ENCODE measurements at regions of chr6 and their contacts with region 1.

Region 1: DNA sequence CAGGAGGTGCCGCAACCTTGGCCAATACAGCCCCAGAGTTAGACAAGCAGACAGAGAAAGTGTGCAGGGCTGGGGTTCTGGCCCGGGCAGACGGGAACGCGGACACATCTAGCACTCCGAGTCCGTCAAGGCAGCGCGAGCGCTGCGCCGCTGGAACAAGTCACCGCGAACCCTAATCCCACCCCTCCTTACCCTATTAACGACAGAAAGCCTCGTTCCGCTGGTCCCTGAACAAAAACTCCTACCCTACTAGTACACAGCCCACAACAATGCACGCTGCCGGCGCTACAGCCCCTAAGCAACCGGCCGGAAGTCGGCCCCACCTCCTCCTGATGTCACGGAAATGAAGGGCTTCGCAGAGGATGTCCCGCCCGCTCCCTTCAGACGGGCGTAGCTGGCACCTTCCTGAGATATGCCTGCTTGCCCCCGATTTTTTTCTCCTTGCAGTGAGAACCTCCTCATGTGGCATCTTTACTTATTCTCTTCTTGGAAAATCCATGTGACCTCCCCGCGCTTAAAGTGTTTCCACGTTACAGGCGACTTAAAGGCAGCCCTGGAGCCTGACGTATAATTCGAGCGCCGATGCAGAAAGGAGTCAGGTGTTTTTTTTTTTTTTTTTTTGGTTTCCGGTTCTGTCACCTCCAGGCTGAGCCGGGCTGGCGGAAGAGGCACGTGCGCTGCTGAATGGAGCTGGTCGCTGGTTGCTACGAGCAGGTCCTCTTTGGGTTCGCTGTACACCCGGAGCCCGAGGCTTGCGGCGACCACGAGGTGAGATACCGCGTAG is at the starts of genes C6orf52 and PAK1IP1:
- DNase-seq: peak; percentile 97
- ATAC-seq: peak; percentile 99
- H3K4me3 ChIP-seq: peak within 1 kb of the TSS; percentile 95 to 98
- H3K27ac ChIP-seq: peak within 1 kb of the TSS; percentile 98
- H3K4me1 ChIP-seq: peaks cover 27% of the 10 kb centered on the region
- H3K27me3 ChIP-seq: no peaks in the 10 kb centered on the region
- CTCF ChIP-seq: no peak
- total RNA-seq, gene C6orf52: 6.5 TPM
- total RNA-seq, gene PAK1IP1: 27.3 TPM

Region 2: GRCh38 chr6:10528170-10528981 is 166.1 kb before region 1 on chr6:
- CTCF ChIA-PET with region 1: no interaction called
- POLR2A ChIA-PET with region 1: interaction called, 15 read pairs
- in situ Hi-C with region 1: no loop called
- intact Hi-C with region 1: loop called (anchors 10 kb)
- DNase-seq: peak; percentile 86
- ATAC-seq: peak; percentile 73
- H3K4me3 ChIP-seq: peak overlapping the region; percentile 64 to 93
- H3K27ac ChIP-seq: peak overlapping the region; percentile 98
- H3K4me1 ChIP-seq: peaks cover 22% of the 10 kb centered on the region
- H3K27me3 ChIP-seq: no peaks in the 10 kb centered on the region
- CTCF ChIP-seq: no peak

Region 3: GRCh38 chr6:10567256-10568026 is 127.1 kb before region 1 on chr6:
- CTCF ChIA-PET with region 1: no interaction called
- POLR2A ChIA-PET with region 1: interaction called, 11 read pairs
- in situ Hi-C with region 1: no loop called
- intact Hi-C with region 1: no loop called
- DNase-seq: no peak
- ATAC-seq: no peak
- H3K4me3 ChIP-seq: no peak overlapping the region
- H3K27ac ChIP-seq: no peak overlapping the region
- H3K4me1 ChIP-seq: no peaks in the 10 kb centered on the region
- H3K27me3 ChIP-seq: no peaks in the 10 kb centered on the region
- CTCF ChIP-seq: no peak

Region 4: GRCh38 chr6:10722820-10723566 is 28.5 kb after region 1 on chr6 and contains the start of gene TMEM14C:
- CTCF ChIA-PET with region 1: interaction called, 11 read pairs
- POLR2A ChIA-PET with region 1: no interaction called
- in situ Hi-C with region 1: no loop called
- intact Hi-C with region 1: no loop called
- DNase-seq: peak; percentile 91
- ATAC-seq: peak; percentile 100
- H3K4me3 ChIP-seq: peak within 1 kb of the TSS; percentile 77 to 91
- H3K27ac ChIP-seq: peak within 1 kb of the TSS; percentile 95
- H3K4me1 ChIP-seq: peaks cover 18% of the 10 kb centered on the region
- H3K27me3 ChIP-seq: no peaks in the 10 kb centered on the region
- CTCF ChIP-seq: no peak
- total RNA-seq, gene TMEM14C: 159 TPM

Region 5: DNA sequence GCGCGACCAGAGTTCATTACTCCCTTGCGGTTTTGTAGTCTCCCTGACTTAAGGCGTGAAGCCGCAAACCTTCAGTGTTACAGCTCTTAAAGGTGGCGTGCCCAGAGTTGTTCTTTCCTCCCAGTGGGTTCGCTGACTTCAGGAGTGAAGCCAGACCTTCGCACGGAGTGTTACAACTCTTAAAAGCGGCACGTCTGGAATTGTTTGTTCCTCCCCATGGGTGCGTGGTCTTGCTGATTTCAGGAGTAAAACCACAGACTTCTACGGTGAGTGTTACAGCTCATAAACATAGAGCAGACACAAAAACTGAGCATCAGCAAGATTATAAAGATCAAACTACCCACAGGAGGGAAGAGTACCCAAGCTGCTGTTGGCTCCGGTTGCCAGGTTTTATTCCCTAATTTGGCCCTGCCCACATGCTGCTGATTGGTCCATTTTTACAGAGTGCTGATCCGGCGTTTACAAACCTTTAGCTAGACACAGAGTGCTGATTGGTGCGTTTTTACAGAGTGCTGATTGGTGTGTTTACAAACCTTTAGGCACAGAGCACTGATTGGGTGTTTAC is 38.7 kb after region 1 on chr6:
- CTCF ChIA-PET with region 1: interaction called, 7 read pairs
- POLR2A ChIA-PET with region 1: interaction called, 10 read pairs
- in situ Hi-C with region 1: no loop called
- intact Hi-C with region 1: no loop called
- DNase-seq: no peak
- ATAC-seq: no peak
- H3K4me3 ChIP-seq: no peak overlapping the region
- H3K27ac ChIP-seq: peak overlapping the region; percentile 98
- H3K4me1 ChIP-seq: peaks cover 28% of the 10 kb centered on the region
- H3K27me3 ChIP-seq: no peaks in the 10 kb centered on the region
- CTCF ChIP-seq: no peak

Region 6: DNA sequence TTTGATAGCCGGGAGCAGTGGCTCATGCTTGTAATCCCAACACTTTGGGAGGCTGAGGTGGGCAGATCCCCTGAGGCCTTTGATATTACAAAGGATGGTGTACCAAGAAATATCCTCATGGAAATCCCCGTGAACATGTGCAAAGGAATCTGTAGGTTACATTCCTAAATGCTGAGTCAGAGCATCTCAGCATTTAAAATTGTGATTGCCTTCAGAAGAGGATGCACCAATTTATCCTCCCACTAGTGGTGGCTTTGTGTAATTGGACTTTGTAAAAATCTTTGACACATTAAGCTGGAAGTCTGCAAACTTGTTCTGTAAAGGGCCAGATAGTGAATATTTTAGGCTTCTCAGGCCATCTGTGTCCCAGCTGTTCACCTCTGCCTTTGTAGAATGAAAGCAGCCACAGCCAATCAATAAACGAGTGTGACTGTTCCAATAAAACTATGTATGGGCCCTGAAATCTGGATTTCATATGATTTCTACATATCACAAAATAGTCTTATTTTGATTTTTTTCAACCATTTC is 64.9 kb after region 1 on chr6:
- CTCF ChIA-PET with region 1: no interaction called
- POLR2A ChIA-PET with region 1: interaction called, 3 read pairs
- in situ Hi-C with region 1: no loop called
- intact Hi-C with region 1: loop called (anchors 1 kb)
- DNase-seq: peak; percentile 90
- ATAC-seq: peak; percentile 88
- H3K4me3 ChIP-seq: no peak overlapping the region
- H3K27ac ChIP-seq: peak overlapping the region; percentile 82
- H3K4me1 ChIP-seq: peaks cover 24% of the 10 kb centered on the region
- H3K27me3 ChIP-seq: no peaks in the 10 kb centered on the region
- CTCF ChIP-seq: peak; percentile 72

Region 7: GRCh38 chr6:11064836-11065235 is 370.3 kb after region 1 on chr6:
- CTCF ChIA-PET with region 1: no interaction called
- POLR2A ChIA-PET with region 1: no interaction called
- in situ Hi-C with region 1: no loop called
- intact Hi-C with region 1: no loop called
- DNase-seq: no peak
- ATAC-seq: no peak
- H3K4me3 ChIP-seq: no peak overlapping the region
- H3K27ac ChIP-seq: no peak overlapping the region
- H3K4me1 ChIP-seq: no peaks in the 10 kb centered on the region
- H3K27me3 ChIP-seq: no peaks in the 10 kb centered on the region
- CTCF ChIP-seq: no peak

Region 8: DNA sequence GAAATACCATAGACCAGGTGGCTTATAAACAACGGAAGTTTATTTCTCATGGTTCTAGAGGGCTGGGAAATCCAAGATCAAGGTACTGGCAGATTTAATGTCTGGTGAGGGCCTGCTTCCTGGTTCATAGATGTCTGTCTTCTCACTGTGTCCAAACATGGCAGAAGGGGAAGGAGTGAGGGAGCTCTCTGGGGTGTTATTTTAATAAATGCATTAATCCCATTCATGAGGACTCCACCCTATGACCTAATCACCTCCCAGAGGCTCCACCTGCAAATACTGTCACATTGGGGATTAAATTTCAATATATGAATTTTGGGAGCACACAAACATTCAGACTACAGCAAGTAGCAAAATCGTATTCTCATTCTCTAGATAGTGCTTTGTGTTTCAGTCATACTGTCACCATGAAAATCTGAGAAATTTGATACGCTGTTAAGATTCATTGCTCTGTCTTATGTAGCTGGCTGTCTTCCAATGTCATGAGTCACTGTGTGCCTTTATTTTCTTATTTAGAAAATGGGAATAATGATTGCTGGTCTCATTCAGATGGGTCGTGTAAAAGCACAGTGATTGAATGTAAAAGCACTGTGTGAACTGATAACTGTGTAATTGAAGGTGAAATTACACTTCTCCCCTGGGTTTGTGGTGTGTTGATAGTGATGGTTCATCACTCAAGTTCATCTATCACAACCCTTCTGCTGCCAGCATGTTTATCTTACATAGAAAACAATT is 425.9 kb after region 1 on chr6:
- CTCF ChIA-PET with region 1: no interaction called
- POLR2A ChIA-PET with region 1: no interaction called
- in situ Hi-C with region 1: no loop called
- intact Hi-C with region 1: no loop called
- DNase-seq: no peak
- ATAC-seq: no peak
- H3K4me3 ChIP-seq: no peak overlapping the region
- H3K27ac ChIP-seq: no peak overlapping the region
- H3K4me1 ChIP-seq: peaks cover 10% of the 10 kb centered on the region
- H3K27me3 ChIP-seq: no peaks in the 10 kb centered on the region
- CTCF ChIP-seq: no peak